HCT116 (cell line): ENCODE measurements at regions of chr20 and their contacts with region 1.

Region 1: DNA sequence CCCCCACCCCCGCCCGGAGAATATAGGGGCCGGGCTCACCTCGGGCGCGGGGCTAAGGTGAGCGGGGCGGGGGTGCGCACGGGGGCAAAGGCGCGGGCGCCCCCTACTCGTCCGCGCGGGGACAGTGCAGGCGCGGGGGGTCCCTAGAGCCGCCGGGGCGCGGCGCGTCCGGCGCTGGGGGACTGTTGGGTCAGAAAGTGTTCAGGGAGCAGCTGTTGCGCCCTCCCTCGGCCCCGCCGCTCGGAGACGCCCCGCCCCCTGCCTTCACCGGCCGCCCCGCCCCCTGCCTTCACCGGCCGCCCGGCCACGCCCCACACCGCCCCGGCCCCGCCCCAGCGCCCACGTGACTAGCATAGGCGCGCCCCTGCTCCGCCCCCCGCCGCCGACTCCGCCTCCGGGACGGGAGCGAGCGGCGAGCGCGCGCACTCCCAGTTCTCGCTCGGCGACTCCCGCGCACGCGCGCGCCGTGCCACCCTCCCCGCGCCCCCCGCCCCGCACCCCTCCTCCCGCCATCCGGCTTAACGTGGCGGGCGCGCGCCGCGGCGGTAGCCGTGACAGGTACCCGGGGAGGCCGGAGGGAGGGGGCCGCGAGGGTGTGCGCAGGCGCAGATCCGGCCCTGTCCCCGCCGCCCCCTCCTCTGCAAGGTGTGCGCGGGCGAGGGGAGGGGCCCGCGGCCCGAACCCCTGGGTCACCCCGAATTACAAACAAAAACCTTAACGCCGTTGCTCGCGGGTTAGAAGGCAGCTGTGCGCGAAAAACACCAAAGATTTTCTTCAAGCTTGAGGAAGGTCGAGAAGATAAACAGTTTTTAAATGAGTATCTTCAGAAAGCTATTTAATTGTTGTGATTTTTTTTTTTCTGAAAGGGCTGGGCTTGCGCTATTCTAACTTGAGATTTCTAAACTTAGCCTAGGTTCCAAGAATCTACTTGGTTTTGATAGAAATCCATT is 704 bp upstream of the ZNF217 start:
- DNase-seq: peak; percentile 73
- ATAC-seq: peak; percentile 78
- H3K4me3 ChIP-seq: peak overlapping the region; percentile 64 to 74
- H3K27ac ChIP-seq: peak overlapping the region; percentile 41
- H3K4me1 ChIP-seq: peaks cover 19 to 26% of the 10 kb centered on the region in 2 experiments
- H3K27me3 ChIP-seq: no peaks in the 10 kb centered on the region
- CTCF ChIP-seq: no peak
- POLR2A ChIP-seq: peak; percentile 18
- RAD21 ChIP-seq: no peak

Region 2: DNA sequence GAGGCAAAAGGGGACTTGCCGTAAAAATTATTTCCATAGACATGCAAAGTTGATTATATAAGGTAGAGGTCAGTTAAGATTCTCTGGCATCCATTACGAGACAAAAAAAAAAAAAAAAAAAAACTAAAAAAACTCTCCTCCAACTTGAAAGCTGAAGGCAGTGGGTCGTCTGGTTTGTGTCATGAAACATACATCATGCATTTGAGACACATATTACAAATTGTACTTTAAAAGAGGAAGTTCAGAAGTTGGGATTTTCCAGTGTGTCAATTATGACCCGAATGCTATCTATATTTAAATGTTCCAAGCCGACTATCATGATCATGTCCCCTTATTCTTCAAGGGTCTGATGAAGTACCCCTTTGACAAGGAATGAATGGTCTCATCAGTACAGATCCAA is 125.8 kb before region 1 on chr20:
- CTCF ChIA-PET with region 1: no interaction called
- POLR2A ChIA-PET with region 1: no interaction called
- RAD21 ChIA-PET with region 1: no interaction called
- intact Hi-C with region 1: no loop called
- DNase-seq: no peak
- ATAC-seq: no peak
- H3K4me3 ChIP-seq: no peak overlapping the region
- H3K27ac ChIP-seq: no peak overlapping the region
- H3K4me1 ChIP-seq: no peaks in the 10 kb centered on the region
- H3K27me3 ChIP-seq: 0 out of 2 replicates have a peak, but pooled peaks cover 6% of the 10 kb centered on the region
- CTCF ChIP-seq: no peak
- POLR2A ChIP-seq: no peak
- RAD21 ChIP-seq: no peak

Region 3: GRCh38 chr20:53611449-53611894 is 17.1 kb after region 1 on chr20:
- CTCF ChIA-PET with region 1: no interaction called
- POLR2A ChIA-PET with region 1: interaction called, 18 read pairs
- RAD21 ChIA-PET with region 1: no interaction called
- intact Hi-C with region 1: no loop called
- DNase-seq: peak; percentile 78
- ATAC-seq: peak; percentile 82
- H3K4me3 ChIP-seq: peak overlapping the region; percentile 15 to 47
- H3K27ac ChIP-seq: peak overlapping the region; percentile 82
- H3K4me1 ChIP-seq: peaks cover 39 to 71% of the 10 kb centered on the region in 2 experiments
- H3K27me3 ChIP-seq: no peaks in the 10 kb centered on the region
- CTCF ChIP-seq: no peak
- POLR2A ChIP-seq: no peak
- RAD21 ChIP-seq: peak; percentile 25; the same call in 1 of the 2 replicates

Region 4: GRCh38 chr20:53623454-53624211 is 29.3 kb after region 1 on chr20:
- CTCF ChIA-PET with region 1: no interaction called
- POLR2A ChIA-PET with region 1: interaction called, 23 read pairs
- RAD21 ChIA-PET with region 1: no interaction called
- intact Hi-C with region 1: loop called (anchors 1 kb)
- DNase-seq: no peak
- ATAC-seq: peak; percentile 78
- H3K4me3 ChIP-seq: peak overlapping the region; percentile 0 to 44
- H3K27ac ChIP-seq: peak overlapping the region; percentile 93
- H3K4me1 ChIP-seq: peaks cover 47 to 50% of the 10 kb centered on the region in 2 experiments
- H3K27me3 ChIP-seq: no peaks in the 10 kb centered on the region
- CTCF ChIP-seq: no peak
- POLR2A ChIP-seq: no peak
- RAD21 ChIP-seq: no peak

Region 5: GRCh38 chr20:53643031-53643832 is 48.9 kb after region 1 on chr20:
- CTCF ChIA-PET with region 1: interaction called, 3 read pairs
- POLR2A ChIA-PET with region 1: no interaction called
- RAD21 ChIA-PET with region 1: no interaction called
- intact Hi-C with region 1: loop called (anchors 1 kb)
- DNase-seq: peak; percentile 57
- ATAC-seq: peak; percentile 73
- H3K4me3 ChIP-seq: peak overlapping the region in 1 of 2 experiments; percentile 35; a peak in 2 of 4 replicates
- H3K27ac ChIP-seq: peak overlapping the region; percentile 90
- H3K4me1 ChIP-seq: peaks cover 19 to 23% of the 10 kb centered on the region in 2 experiments
- H3K27me3 ChIP-seq: no peaks in the 10 kb centered on the region
- CTCF ChIP-seq: no peak
- POLR2A ChIP-seq: no peak
- RAD21 ChIP-seq: no peak; the same call in 1 of the 2 replicates

Region 6: DNA sequence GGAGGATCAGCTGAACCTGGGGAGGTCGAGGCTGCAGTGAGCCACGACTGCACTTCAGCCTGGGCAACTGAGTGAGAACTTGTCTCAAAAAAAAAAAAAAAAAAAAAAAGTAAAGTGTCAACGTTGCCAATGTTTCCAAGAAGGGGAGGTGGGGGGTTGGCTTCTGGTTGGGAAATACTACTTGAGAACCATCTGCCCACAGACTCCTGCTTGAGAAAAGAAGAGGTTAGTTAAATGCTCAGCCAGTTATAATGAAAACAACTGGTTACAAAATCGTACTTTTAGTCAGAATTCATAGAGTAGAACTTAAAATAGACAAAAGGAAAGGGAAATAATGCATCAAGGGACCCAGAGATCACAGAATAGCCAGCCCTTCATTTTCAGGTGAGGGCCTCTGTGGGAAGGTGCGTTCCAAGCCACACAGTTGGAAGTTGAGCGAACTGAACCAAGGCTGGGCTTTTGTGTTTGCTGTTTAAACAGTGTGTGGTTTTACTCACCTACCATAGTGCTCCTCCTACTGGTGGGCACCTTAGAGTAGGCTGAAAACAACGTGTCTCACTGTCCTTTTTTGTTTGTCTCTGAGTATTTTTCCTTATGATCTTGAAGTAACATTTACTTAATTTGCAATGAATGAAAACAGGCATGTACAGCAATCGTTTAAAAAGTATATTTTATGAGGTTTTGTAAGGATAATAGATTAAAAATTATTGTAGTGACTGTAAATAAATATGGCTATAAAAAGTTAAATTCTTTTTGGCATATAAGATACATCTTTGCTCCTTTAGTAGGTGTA is 275.3 kb after region 1 on chr20:
- CTCF ChIA-PET with region 1: no interaction called
- POLR2A ChIA-PET with region 1: interaction called, 4 read pairs
- RAD21 ChIA-PET with region 1: no interaction called
- intact Hi-C with region 1: loop called (anchors 5 kb)
- DNase-seq: peak; percentile 84
- ATAC-seq: peak; percentile 95
- H3K4me3 ChIP-seq: no peak overlapping the region
- H3K27ac ChIP-seq: peak overlapping the region; percentile 57
- H3K4me1 ChIP-seq: peaks cover 31 to 42% of the 10 kb centered on the region in 2 experiments
- H3K27me3 ChIP-seq: no peaks in the 10 kb centered on the region
- CTCF ChIP-seq: peak; percentile 67 to 90 (median 84)
- POLR2A ChIP-seq: no peak
- RAD21 ChIP-seq: peak; percentile 90